Endothelial cell of umbilical vein (primary cell): ENCODE measurements at regions of chr12 and their contacts with region 1.

Region 1: GRCh38 chr12:85468356-85469157 is 188.5 kb downstream of the ALX1 start:
- DNase-seq: peak; percentile 80
- H3K4me3 ChIP-seq: peak overlapping the region in 2 of 3 experiments; percentile 41 to 67
- H3K27ac ChIP-seq: no peak overlapping the region
- H3K4me1 ChIP-seq: no peaks in the 10 kb centered on the region
- H3K27me3 ChIP-seq: peaks cover 0 to 2% of the 10 kb centered on the region in 2 experiments
- CTCF ChIP-seq: peak; percentile 64 to 69
- POLR2A ChIP-seq: no peak

Region 2: DNA sequence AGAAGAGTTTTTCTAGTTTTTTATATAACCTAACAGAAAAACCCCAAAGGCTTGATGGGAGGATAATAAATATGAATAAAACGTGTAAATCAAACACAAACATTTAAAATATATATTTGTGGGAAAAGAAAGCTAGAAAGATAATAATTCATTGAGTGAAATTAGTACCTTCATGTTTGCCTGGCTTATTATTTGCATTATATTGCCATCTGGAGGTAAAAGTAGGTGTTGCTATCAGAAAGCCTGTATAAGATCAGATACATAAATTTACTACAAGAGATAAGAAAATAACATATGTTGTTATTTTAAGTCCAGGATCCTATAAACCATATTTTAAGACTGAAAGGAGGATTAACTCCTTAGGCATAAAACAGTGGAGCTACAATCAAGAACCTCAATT is 483.3 kb after region 1 on chr12:
- CTCF ChIA-PET with region 1: interaction called, 66 read pairs
- POLR2A ChIA-PET with region 1: no interaction called
- dilution Hi-C with region 1: no loop called
- intact Hi-C with region 1: no loop called
- DNase-seq: peak; percentile 55
- H3K4me3 ChIP-seq: no peak overlapping the region
- H3K27ac ChIP-seq: no peak overlapping the region
- H3K4me1 ChIP-seq: peaks cover 4% of the 10 kb centered on the region
- H3K27me3 ChIP-seq: no peaks in the 10 kb centered on the region
- CTCF ChIP-seq: peak; percentile 17 to 25
- POLR2A ChIP-seq: no peak